ENCODE measurements at regions of chr3 and their contacts with region 1.

Region 1: GRCh38 chr3:42772670-42773408 is at the start of gene CCDC13:
- DNase-seq: peak; percentile 97
- H3K4me3 Mint-ChIP-seq: peak within 1 kb of the TSS; percentile 90
- H3K27ac Mint-ChIP-seq: peak within 1 kb of the TSS; percentile 66
- H3K4me1 Mint-ChIP-seq: peaks cover 11% of the 10 kb centered on the region
- H3K27me3 Mint-ChIP-seq: peaks cover 14% of the 10 kb centered on the region
- total RNA-seq, gene CCDC13: 0.16 TPM in 1 of 2 replicates, not detected in the other

Region 2: DNA sequence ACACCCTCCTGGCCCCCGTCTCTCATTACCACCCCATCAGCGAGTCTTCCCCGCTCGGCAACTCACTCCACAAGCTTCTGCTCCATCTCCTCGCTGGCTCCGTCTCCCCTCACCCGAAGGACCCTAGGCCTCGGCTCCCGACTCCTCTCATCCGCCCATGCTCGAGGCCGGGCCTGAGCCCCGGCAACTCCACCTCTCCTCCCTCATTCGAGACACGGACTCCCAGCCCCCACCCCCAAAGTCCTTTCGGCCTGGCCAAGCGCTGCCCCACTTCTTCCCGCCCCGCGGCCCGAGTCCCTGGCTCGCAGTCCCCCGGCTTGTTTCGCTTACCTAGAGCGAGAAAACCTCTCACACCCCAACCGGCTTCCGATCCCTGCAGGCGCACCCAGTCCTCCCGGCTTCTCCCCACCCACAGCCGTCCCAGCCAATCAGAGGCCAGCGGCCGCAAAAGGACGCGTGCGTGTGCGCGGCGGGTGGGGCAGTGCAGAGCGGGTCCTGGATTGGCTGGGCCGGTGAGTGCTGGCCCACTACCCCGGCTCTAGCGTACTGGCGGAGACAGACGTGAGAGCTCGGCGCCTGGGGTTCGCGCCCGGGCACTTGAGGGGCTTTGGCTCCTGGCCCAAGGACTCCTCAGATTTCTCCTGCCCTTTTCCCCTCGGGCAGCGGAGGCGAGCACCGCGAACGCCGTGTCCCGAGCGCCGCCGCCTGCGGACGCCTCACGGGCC is 31.4 kb after region 1 on chr3 and contains the start of gene HIGD1A:
- intact Hi-C with region 1: loop called (anchors 1 kb)
- DNase-seq: peak; percentile 98
- H3K4me3 Mint-ChIP-seq: peak within 1 kb of the TSS; percentile 99
- H3K27ac Mint-ChIP-seq: peak within 1 kb of the TSS; percentile 97
- H3K4me1 Mint-ChIP-seq: peaks cover 29% of the 10 kb centered on the region
- H3K27me3 Mint-ChIP-seq: peaks cover 34% of the 10 kb centered on the region
- total RNA-seq, gene HIGD1A: 88.6 and 91.6 TPM in 2 replicates

Measured in activated CD4-positive, alpha-beta T cell treated with anti-CD3 and anti-CD28 coated beads, Interleukin-2, amount 10 ng/mL, durations not matched to agents 24 days and 14 days (primary cell).